Activated CD4-positive, alpha-beta memory T cell treated with anti-CD3 and anti-CD28 coated beads for 36 hours (primary cell): ENCODE measurements at regions of chr3 and their contacts with region 1.

Region 1: GRCh38 chr3:47164007-47164881 is at the start of gene SETD2:
- DNase-seq: peak; percentile 91
- H3K4me3 Mint-ChIP-seq: peak within 1 kb of the TSS; percentile 97
- H3K27ac Mint-ChIP-seq: peak within 1 kb of the TSS; percentile 99
- H3K4me1 Mint-ChIP-seq: peaks cover 43% of the 10 kb centered on the region
- H3K27me3 Mint-ChIP-seq: peaks cover 1% of the 10 kb centered on the region
- total RNA-seq, gene SETD2: 31.2 to 31.8 TPM

Region 2: DNA sequence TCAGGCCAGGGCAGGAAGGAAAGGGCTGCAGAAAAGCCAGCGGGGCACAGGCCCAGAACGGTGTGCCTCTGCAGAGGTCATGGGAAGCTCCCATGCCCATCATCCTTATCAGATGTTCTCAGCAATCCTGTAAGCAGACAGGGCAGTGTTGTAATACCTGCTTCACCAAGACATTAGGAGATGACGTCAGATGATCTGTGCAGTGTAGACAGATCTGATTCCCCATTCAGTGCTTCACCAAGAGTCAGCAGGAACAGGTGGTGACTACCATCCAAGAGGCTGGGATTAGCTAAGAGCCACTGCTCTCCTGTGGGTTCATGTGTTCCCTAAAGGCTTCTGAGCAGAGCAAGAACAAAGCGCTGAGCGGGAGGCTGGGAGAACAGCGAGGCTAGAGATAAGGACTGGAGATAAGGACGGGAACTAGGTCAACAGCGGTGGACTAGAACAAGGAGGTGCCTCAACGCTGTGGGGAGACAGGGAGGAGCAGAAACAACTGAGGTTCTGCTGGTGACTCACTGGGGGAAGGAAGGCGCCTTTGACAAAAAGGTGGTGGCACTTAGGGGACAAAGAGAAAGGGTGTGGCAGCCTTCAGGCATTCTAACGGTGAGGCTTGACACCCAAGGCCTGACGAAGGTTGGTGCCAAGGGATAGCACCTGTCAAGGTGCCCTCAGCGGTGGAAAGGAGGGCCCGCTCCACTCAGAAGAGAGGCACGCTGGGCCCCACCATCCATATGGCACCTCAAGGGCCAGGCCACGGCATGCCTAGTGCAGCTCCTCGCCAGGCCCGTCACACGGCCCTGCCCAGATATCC is 216.1 kb before region 1 on chr3:
- CTCF ChIA-PET with region 1: no interaction called
- POLR2A ChIA-PET with region 1: no interaction called
- intact Hi-C with region 1: loop called (anchors 10 kb)
- DNase-seq: peak; percentile 82
- H3K4me3 Mint-ChIP-seq: peak overlapping the region; percentile 62
- H3K27ac Mint-ChIP-seq: peak overlapping the region; percentile 95
- H3K4me1 Mint-ChIP-seq: peaks cover 76% of the 10 kb centered on the region
- H3K27me3 Mint-ChIP-seq: no peaks in the 10 kb centered on the region

Region 3: GRCh38 chr3:46965151-46965550 is 199.1 kb before region 1 on chr3:
- CTCF ChIA-PET with region 1: no interaction called
- POLR2A ChIA-PET with region 1: no interaction called
- intact Hi-C with region 1: no loop called
- DNase-seq: peak; percentile 42
- H3K4me3 Mint-ChIP-seq: no peak overlapping the region
- H3K27ac Mint-ChIP-seq: peak overlapping the region; percentile 26
- H3K4me1 Mint-ChIP-seq: peaks cover 80% of the 10 kb centered on the region
- H3K27me3 Mint-ChIP-seq: no peaks in the 10 kb centered on the region

Region 4: DNA sequence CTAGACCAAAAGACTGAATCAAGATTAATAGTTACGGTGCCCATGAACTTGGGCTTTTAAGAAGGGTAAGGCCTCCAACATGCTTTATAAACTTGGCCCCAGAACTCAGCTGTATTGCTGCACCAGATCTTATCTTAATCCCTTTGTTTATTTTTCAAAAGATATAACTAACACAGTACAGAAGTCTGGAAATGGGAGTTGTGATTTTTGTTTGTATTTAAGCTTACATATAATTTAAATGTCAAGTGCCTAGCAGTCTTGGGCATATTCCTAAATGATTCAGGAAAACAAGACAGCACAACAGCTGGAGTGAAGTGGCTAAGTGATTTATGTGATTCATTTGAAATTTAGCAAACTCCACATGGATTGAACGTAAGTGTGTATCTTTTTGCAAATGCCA is 128.6 kb before region 1 on chr3:
- CTCF ChIA-PET with region 1: interaction called, 4 read pairs
- POLR2A ChIA-PET with region 1: no interaction called
- intact Hi-C with region 1: loop called (anchors 5 kb)
- DNase-seq: no peak
- H3K4me3 Mint-ChIP-seq: no peak overlapping the region
- H3K27ac Mint-ChIP-seq: no peak overlapping the region
- H3K4me1 Mint-ChIP-seq: peaks cover 43% of the 10 kb centered on the region
- H3K27me3 Mint-ChIP-seq: no peaks in the 10 kb centered on the region

Region 5: GRCh38 chr3:47145272-47145671 is 19.0 kb before region 1 on chr3:
- CTCF ChIA-PET with region 1: interaction called, 7 read pairs
- POLR2A ChIA-PET with region 1: interaction called, 12 read pairs
- intact Hi-C with region 1: loop called (anchors 2 kb)
- DNase-seq: no peak
- H3K4me3 Mint-ChIP-seq: no peak overlapping the region
- H3K27ac Mint-ChIP-seq: no peak overlapping the region
- H3K4me1 Mint-ChIP-seq: peaks cover 51% of the 10 kb centered on the region
- H3K27me3 Mint-ChIP-seq: no peaks in the 10 kb centered on the region

Region 6: DNA sequence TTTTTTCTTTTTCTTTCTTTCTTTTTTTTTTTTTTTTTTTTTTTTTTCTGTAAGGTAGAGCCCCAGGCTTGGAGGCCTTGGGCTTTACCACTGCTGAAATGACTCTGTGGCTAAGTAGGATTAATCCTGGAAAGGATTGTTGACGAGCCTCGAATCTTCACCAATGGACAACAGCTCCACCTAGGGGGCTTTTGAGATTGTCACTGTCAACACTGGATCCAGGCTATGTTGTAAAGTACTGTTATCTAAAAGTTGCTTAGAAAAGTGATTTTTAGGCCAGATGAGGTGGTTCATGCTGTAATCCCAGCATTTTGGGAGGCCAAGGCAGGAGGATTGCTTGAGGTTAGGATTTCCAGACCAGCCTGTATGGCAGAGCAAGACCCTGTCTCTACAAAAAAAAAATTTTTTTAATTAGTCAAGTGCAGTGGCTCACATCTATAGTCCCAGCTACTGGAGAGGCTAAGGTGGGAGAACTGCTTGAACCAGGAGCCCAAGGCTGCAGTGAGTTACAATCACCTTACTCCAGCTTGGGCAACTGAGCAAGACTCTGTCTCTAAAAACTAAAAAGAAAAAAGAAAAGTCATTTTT is 160.1 kb after region 1 on chr3:
- CTCF ChIA-PET with region 1: interaction called, 19 read pairs
- POLR2A ChIA-PET with region 1: no interaction called
- intact Hi-C with region 1: loop called (anchors 2 kb)
- DNase-seq: peak; percentile 64
- H3K4me3 Mint-ChIP-seq: no peak overlapping the region
- H3K27ac Mint-ChIP-seq: no peak overlapping the region
- H3K4me1 Mint-ChIP-seq: peaks cover 3% of the 10 kb centered on the region
- H3K27me3 Mint-ChIP-seq: no peaks in the 10 kb centered on the region